H1 (cell line): ENCODE measurements at regions of chr6 and their contacts with region 1.

Region 1: GRCh38 chr6:170260723-170261122 is 30.2 kb downstream of the DLL1 start:
- DNase-seq: no peak
- H3K4me3 ChIP-seq: no peak overlapping the region
- H3K27ac ChIP-seq: no peak overlapping the region
- H3K4me1 ChIP-seq: no peaks in the 10 kb centered on the region
- H3K27me3 ChIP-seq: no peaks in the 10 kb centered on the region; a peak in 1 of 7 replicates
- CTCF ChIP-seq: peak; percentile 24 to 43 (median 43); a peak in 3 of 4 replicates
- EP300 ChIP-seq: no peak
- POLR2A ChIP-seq: no peak
- RAD21 ChIP-seq: peak; percentile 5 to 34; a peak in 2 of 4 replicates

Region 2: DNA sequence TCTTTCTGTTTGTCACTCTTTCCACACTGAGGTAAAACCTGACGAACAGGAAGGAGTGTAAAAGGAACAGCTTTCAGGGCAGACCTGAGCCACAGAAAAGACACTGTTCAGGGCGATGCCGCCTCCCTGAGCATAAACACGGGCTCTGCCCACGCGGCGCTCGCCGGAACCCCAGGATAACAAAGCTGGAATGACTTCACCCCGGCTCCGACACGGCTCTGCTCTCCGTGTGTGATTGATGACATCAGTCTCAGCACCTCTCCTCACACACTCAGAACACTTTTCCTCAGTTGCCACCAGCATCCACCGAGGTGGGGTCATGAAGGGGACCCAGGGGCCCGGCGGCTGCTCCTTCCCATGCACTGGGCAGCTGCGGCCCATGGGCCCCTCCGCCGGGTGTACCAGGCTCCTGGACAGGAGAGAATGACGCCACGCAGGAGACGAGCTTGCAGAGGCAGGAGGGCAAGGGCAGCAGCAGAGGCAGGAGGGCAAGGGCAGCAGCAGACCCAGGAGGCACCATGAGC is 13.5 kb before region 1 on chr6:
- CTCF ChIA-PET with region 1: interaction called, 14 read pairs
- POLR2A ChIA-PET with region 1: interaction called, 3 read pairs
- DNase-seq: no peak
- H3K4me3 ChIP-seq: no peak overlapping the region
- H3K27ac ChIP-seq: no peak overlapping the region
- H3K4me1 ChIP-seq: peaks cover 0 to 12% (median 3%) of the 10 kb centered on the region in 4 experiments; a peak in 4 of 7 replicates
- H3K27me3 ChIP-seq: no peaks in the 10 kb centered on the region
- CTCF ChIP-seq: no peak
- EP300 ChIP-seq: no peak
- POLR2A ChIP-seq: no peak
- RAD21 ChIP-seq: no peak